ENCODE measurements at regions of chr4 and their contacts with region 1.

Region 1: DNA sequence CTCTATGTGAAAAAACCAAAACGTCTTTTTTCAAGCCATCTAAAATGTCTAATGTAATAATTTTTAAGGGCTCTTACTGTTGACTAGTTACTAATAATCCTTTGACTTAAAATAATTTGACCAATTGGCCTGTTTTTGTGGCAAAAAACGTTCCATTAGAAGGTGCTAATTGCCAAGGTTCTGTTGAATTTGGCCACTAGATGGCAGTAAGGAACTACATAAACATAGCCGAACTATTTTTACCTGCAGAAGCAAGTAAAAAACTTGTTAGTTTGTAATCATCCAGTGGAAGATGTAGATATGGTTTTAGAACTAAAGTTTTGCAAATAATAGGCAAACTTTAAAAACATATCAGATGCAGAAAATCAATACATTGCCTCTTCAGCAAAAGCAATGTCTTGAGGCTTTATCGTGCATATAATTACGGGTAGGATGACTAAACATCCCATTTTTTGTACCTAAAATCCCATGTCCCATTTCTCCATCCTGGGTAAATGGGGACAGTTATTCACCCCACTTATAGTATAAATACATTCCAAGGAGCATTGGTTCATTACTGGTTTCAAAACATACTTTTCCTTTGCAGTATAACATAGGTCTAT is 57.6 kb downstream of the PROM1 start:
- DNase-seq: peak; percentile 59

Region 2: DNA sequence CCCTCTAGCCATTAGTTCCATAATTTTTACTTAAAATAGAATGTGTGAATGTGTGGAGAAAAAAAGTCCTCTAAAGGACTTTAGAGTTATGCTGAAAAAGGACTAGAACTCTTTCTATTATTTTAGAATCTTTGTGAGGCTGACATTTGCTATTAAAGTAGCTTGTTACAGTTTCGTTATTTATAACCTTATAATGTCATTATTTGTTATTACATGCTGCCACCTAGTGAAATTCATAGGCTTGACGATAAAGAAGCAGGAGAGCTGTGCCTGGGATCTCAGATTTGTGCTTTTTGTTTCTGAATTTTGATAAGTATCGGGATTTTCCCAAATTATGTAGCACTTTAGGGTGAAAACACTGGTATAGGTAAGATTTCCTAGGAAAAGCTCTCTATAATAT is 238.5 kb after region 1 on chr4:
- in situ Hi-C with region 1: loop called (anchors 25 kb)
- DNase-seq: peak; percentile 40